ENCODE measurements at regions of chr22 and their contacts with region 1.

Region 1: DNA sequence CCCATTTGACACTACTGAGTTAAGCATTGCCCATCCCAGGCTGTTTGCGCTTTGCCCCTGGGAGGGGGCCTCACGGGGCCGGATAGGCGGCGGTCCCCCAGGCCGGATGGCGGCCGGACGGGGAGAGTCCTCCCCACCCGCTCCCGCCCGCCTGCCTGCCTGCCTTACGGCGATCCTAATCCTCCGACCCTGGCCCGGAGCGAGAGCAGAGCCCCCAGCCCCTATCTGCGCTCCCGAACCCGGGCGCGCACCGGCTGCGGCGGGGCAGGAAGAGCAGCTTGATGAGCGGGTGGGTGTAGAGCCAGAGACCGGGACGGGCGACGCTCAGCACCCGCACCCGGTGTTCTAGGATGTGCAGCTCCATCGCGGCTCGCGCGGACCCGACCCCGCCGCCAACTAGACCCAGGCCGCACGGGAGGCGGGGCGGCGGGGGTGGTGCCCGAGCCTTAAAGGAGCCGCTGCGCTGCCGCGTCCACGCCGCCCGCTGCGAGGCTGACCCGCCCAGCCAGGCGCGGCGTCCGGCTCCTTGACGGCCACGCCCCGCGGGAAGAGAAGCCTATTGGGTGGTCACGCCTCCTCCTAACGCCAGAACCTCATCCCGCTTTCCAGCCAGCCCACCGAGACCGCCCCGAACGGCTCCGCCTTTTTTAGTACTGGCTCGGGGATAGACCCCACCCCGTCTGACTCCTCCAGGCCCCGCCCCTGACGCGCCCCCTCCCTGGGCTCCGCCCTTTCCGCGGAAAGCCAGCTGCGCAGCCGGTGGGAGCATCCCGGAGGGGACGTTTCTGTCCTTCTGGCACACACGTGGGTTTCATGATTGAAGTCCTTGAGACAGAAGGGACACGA is at the start of gene CASTOR1:
- DNase-seq: peak; percentile 96
- ATAC-seq: peak; percentile 87
- H3K4me3 ChIP-seq: peak within 1 kb of the TSS; percentile 65 to 80
- H3K27ac ChIP-seq: peak within 1 kb of the TSS; percentile 53
- H3K4me1 ChIP-seq: peaks cover 37 to 54% of the 10 kb centered on the region in 2 experiments
- H3K27me3 ChIP-seq: no peaks in the 10 kb centered on the region
- CTCF ChIP-seq: no peak
- POLR2A ChIP-seq: no peak
- RAD21 ChIP-seq: no peak
- total RNA-seq, gene CASTOR1: 6.5 TPM

Region 2: GRCh38 chr22:30062950-30063349 is 226.4 kb before region 1 on chr22:
- CTCF ChIA-PET with region 1: no interaction called
- POLR2A ChIA-PET with region 1: no interaction called
- RAD21 ChIA-PET with region 1: no interaction called
- intact Hi-C with region 1: no loop called
- DNase-seq: no peak
- ATAC-seq: no peak
- H3K4me3 ChIP-seq: no peak overlapping the region
- H3K27ac ChIP-seq: no peak overlapping the region
- H3K4me1 ChIP-seq: no peaks in the 10 kb centered on the region
- H3K27me3 ChIP-seq: no peaks in the 10 kb centered on the region
- CTCF ChIP-seq: no peak
- POLR2A ChIP-seq: no peak
- RAD21 ChIP-seq: no peak

Region 3: GRCh38 chr22:30262917-30263741 is 26.2 kb before region 1 on chr22:
- CTCF ChIA-PET with region 1: interaction called, 12 read pairs
- POLR2A ChIA-PET with region 1: interaction called, 3 read pairs
- RAD21 ChIA-PET with region 1: interaction called in 1 of 2 experiments, 3 read pairs
- intact Hi-C with region 1: loop called (anchors 1 kb)
- DNase-seq: no peak
- ATAC-seq: peak; percentile 64
- H3K4me3 ChIP-seq: peak overlapping the region in 1 of 2 experiments; percentile 45; a peak in 2 of 4 replicates
- H3K27ac ChIP-seq: no peak overlapping the region
- H3K4me1 ChIP-seq: peaks cover 6 to 23% of the 10 kb centered on the region in 2 experiments
- H3K27me3 ChIP-seq: no peaks in the 10 kb centered on the region
- CTCF ChIP-seq: peak in 2 of 3 experiments; percentile 91 to 96; a peak in 4 of 6 replicates
- POLR2A ChIP-seq: no peak
- RAD21 ChIP-seq: no peak

Region 4: GRCh38 chr22:30326706-30327362 is 37.5 kb after region 1 on chr22 and contains the start of gene TBC1D10A:
- CTCF ChIA-PET with region 1: interaction called, 81 read pairs
- POLR2A ChIA-PET with region 1: interaction called, 8 read pairs
- RAD21 ChIA-PET with region 1: interaction called, 16 to 21 read pairs
- intact Hi-C with region 1: loop called (anchors 1 kb)
- DNase-seq: peak; percentile 85
- ATAC-seq: peak; percentile 91
- H3K4me3 ChIP-seq: peak within 1 kb of the TSS; percentile 69 to 78
- H3K27ac ChIP-seq: peak within 1 kb of the TSS; percentile 64
- H3K4me1 ChIP-seq: peaks cover 26 to 39% of the 10 kb centered on the region in 2 experiments
- H3K27me3 ChIP-seq: no peaks in the 10 kb centered on the region
- CTCF ChIP-seq: no peak
- POLR2A ChIP-seq: no peak
- RAD21 ChIP-seq: no peak
- total RNA-seq, gene TBC1D10A: 18.6 TPM

Region 5: DNA sequence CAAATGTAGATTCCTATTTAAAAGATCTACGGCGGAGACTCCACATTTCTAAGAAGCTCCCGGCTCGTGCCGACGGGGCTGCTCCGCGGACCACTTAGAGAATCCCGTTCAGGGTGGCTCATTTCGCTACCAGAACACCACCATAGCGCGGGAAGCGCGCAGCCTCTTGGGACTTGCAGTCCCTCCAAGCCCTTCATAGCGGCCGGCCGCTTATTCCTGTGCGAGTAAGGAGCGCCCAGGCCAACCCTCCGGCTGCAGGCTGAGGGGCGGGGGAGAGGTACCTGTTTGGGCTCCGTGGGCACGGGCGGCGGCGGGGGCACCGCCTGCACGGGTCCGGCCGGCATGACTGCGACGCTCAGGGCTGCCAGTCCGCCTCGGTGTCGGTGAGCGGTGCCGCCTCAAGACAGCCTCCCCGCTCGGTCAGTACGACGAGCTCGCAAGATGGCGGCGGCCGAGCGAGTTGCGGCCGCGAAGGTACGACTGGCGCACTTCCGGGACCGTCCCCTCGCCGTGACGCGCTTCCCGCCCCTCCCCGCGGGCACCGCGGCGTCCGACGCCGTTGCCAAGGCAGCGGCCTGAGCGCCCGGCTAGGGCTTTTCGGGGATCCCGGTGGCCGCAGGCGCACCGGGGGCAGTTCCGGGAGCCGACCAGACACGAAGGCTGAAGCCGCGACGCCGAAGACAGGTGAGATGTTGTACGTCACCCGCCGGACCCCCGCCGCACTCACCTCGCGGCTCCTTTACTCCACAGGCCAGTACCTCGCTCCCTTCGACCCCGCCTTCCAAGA is 67.3 kb after region 1 on chr22 and contains the starts of genes CCDC157 and SF3A1:
- CTCF ChIA-PET with region 1: interaction called, 12 read pairs
- POLR2A ChIA-PET with region 1: interaction called, 4 read pairs
- RAD21 ChIA-PET with region 1: no interaction called
- intact Hi-C with region 1: no loop called
- DNase-seq: peak; percentile 59
- ATAC-seq: peak; percentile 88
- H3K4me3 ChIP-seq: peak within 1 kb of the TSS; percentile 93 to 96
- H3K27ac ChIP-seq: peak within 1 kb of the TSS; percentile 92
- H3K4me1 ChIP-seq: peaks cover 12 to 22% of the 10 kb centered on the region in 2 experiments; a peak in 3 of 4 replicates
- H3K27me3 ChIP-seq: no peaks in the 10 kb centered on the region
- CTCF ChIP-seq: no peak
- POLR2A ChIP-seq: no peak
- RAD21 ChIP-seq: no peak
- total RNA-seq, gene CCDC157: 2.1 TPM
- total RNA-seq, gene SF3A1: 230 TPM

Region 6: DNA sequence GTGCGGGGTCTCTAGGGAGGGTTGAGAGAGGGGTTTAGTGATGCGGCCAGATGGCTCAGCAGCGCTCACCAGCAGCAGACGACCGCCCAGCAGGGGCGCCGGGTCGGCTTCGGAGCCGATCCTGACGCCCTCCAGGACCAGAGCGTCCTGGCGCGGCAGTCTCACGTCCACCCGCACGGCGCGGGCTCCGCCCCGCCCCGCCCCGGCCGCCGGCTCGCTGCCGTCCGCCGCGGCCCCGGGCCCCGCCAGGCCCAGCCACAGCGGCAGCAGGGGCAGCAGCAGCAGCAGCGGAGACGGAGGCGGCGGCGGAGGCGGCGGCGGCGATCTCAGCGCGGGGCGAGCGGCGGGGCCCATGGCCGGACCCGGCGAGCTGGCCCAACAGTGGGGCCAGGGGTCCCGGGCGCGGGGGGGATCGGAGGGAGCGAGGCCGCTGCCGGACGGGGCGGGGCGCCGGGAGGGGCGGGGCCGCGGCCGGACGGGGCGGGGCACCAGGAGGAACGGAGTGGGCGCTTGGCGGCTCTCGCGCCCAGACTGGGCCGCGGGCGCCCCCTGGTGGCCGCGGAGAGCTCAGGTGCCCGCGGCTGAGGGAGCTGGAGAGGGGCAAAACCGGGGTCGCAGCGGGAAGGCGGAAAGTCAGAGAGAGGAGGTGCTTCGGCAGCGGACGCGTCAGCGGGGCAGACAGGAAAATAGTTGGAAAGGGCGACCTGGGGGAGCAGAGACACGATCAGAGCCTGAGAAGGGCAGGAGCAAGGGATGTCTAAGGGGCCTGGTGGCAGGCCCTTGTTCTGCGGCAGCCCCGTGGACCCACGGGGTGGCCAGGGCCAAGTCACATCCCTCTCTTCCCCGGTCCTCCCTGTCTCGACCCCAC is 97.8 kb after region 1 on chr22 and contains the start of gene RNF215:
- CTCF ChIA-PET with region 1: interaction called, 57 read pairs
- POLR2A ChIA-PET with region 1: interaction called, 10 read pairs
- RAD21 ChIA-PET with region 1: interaction called, 4 to 12 read pairs
- intact Hi-C with region 1: loop called (anchors 1 kb)
- DNase-seq: peak; percentile 44
- ATAC-seq: peak; percentile 88
- H3K4me3 ChIP-seq: peak within 1 kb of the TSS; percentile 60 to 68
- H3K27ac ChIP-seq: peak within 1 kb of the TSS; percentile 69
- H3K4me1 ChIP-seq: peaks cover 3 to 31% of the 10 kb centered on the region in 2 experiments; a peak in 3 of 4 replicates
- H3K27me3 ChIP-seq: no peaks in the 10 kb centered on the region
- CTCF ChIP-seq: peak; percentile 77 to 78 (median 78)
- POLR2A ChIP-seq: no peak
- RAD21 ChIP-seq: peak; percentile 88
- total RNA-seq, gene RNF215: 20.2 TPM

Region 7: DNA sequence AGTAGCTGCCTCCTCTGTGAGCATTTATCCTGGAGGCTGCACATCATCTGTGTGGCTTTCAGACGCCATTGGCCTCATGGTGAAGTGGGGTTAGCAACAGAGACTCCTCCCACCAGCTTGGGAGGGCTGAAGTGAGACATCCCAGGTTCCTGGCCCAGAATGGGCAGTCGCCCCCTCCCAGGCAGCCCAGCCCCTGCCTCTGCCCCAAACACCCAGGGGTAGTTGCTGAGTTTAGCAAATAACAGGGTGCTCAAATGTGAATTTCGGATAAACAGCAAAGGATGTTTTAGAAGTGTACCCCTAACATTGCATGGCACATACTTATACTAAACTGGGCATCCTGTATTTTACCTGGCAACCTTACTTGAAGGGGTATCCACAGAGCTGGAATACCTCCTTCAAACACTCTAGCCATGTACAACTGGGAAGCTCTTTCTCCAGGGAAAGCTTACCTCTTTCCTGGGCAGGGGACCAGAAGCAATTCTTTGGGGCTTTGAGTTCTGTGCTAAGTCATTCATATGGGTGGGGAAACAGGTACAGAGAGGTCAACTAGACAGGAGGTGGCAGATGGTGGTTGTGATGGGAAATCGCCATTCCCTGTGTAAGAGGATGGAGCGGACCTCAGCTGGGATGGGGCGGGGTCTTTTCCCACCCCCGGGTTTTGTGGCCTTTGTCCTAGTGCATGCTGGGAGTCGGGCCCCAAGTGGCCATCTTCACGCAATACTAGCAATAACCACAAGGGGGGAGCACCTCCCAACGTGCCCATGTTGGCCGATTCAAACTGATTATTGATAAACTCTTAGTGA is 155.5 kb after region 1 on chr22:
- CTCF ChIA-PET with region 1: no interaction called
- POLR2A ChIA-PET with region 1: no interaction called
- RAD21 ChIA-PET with region 1: no interaction called
- intact Hi-C with region 1: no loop called
- DNase-seq: peak; percentile 54
- ATAC-seq: peak; percentile 85
- H3K4me3 ChIP-seq: peak overlapping the region in 1 of 2 experiments; percentile 6; a peak in 1 of 4 replicates
- H3K27ac ChIP-seq: peak overlapping the region; percentile 4
- H3K4me1 ChIP-seq: peaks cover 6 to 40% of the 10 kb centered on the region in 2 experiments
- H3K27me3 ChIP-seq: no peaks in the 10 kb centered on the region
- CTCF ChIP-seq: peak; percentile 81 to 86 (median 85)
- POLR2A ChIP-seq: peak; percentile 98
- RAD21 ChIP-seq: peak; percentile 84

Region 8: GRCh38 chr22:30574997-30575671 is 285.8 kb after region 1 on chr22:
- CTCF ChIA-PET with region 1: no interaction called
- POLR2A ChIA-PET with region 1: no interaction called
- RAD21 ChIA-PET with region 1: no interaction called
- intact Hi-C with region 1: no loop called
- DNase-seq: no peak
- ATAC-seq: peak; percentile 26; the same call in 1 of the 2 replicates
- H3K4me3 ChIP-seq: no peak overlapping the region
- H3K27ac ChIP-seq: no peak overlapping the region
- H3K4me1 ChIP-seq: peaks cover 6 to 22% of the 10 kb centered on the region in 2 experiments; a peak in 3 of 4 replicates
- H3K27me3 ChIP-seq: no peaks in the 10 kb centered on the region
- CTCF ChIP-seq: no peak
- POLR2A ChIP-seq: no peak
- RAD21 ChIP-seq: no peak

Measured in HCT116 (cell line).